Motor neuron (in vitro differentiated cells): ENCODE measurements at regions of chr15 and their contacts with region 1.

Region 1: GRCh38 chr15:26260517-26261133 is 397.5 kb upstream of the ATP10A start:
- ATAC-seq: peak; percentile 46 to 92 (median 68)
- H3K4me3 ChIP-seq: no peak overlapping the region
- H3K27ac ChIP-seq: no peak overlapping the region
- H3K4me1 ChIP-seq: no peaks in the 10 kb centered on the region

Region 2: GRCh38 chr15:25508369-25509002 is 752.1 kb before region 1 on chr15:
- in situ Hi-C with region 1: loop called in 1 of 9 experiments (anchors 25 kb)
- ATAC-seq: peak in 5 of 8 experiments; percentile 22 to 51 (median 45)
- H3K4me3 ChIP-seq: no peak overlapping the region
- H3K27ac ChIP-seq: no peak overlapping the region
- H3K4me1 ChIP-seq: peaks cover 12 to 17% of the 10 kb centered on the region in 2 donors

Region 3: GRCh38 chr15:25710184-25710583 is 550.4 kb before region 1 on chr15:
- in situ Hi-C with region 1: loop called in 1 of 9 experiments (anchors 25 kb)
- ATAC-seq: peak; percentile 55 to 90 (median 74)
- H3K4me3 ChIP-seq: no peak overlapping the region
- H3K27ac ChIP-seq: no peak overlapping the region
- H3K4me1 ChIP-seq: no peaks in the 10 kb centered on the region

Region 4: GRCh38 chr15:25790000-25790660 is 470.5 kb before region 1 on chr15:
- in situ Hi-C with region 1: no loop called
- ATAC-seq: peak in 3 of 8 experiments; percentile 72 to 82 (median 73)
- H3K4me3 ChIP-seq: no peak overlapping the region
- H3K27ac ChIP-seq: no peak overlapping the region
- H3K4me1 ChIP-seq: no peaks in the 10 kb centered on the region

Region 5: DNA sequence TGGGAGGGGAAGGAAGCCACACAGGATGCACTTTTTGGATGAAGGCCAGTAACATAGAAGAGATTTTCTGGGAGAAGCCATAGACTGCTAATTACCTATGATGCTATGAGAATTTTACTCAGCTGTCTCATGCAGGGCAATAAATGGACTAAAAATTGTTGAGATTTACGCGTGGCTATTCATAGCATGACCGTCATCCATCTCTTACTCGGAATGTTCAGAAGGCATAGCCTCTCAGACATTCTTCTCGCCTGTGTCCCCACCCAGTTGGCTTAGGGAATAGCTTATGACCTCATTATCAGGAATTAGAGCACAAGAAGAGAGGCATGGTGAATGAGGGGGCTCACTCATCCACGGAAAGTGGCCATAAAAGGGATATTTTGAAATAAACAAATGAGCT is 289.6 kb before region 1 on chr15:
- in situ Hi-C with region 1: loop called in 1 of 9 experiments (anchors 25 kb)
- ATAC-seq: peak; percentile 17 to 95 (median 92)
- H3K4me3 ChIP-seq: no peak overlapping the region
- H3K27ac ChIP-seq: no peak overlapping the region
- H3K4me1 ChIP-seq: peaks cover 24 to 29% of the 10 kb centered on the region in 2 donors